ENCODE measurements at regions of chr3 and their contacts with region 1.

Region 1: DNA sequence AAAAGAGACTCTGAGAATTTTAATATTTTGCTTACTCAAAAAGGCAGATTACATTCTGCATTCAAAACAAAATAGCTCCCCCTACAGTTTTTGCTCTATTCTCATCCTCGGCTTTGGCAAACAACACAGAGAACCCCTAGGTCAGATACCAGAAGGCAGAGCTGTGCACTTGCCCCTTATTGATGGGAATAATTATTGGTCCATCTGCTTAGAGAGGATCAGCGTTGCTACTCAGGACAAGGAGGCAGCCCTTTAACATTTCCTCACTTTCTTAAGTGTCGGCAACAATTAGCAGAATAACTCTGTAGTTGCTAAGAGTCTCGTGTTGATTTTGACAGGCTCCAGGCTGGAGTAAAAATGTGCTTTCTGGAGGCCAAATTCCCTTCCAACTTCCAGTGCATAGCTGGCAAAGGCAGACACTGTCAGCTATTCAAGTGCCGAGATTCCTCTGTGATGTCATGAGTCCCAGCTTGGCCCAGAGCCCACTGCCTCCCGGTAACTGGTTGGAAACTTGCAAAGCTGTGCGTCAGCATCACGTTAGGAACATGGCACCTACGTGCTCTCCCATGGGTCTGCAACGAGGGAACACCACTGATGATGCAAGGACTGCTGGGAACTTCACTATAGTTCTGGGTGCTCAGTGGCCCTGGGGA is 482.7 kb upstream of the ADAMTS9 start:
- DNase-seq: peak; percentile 59
- H3K4me3 ChIP-seq: no peak overlapping the region
- H3K27ac ChIP-seq: no peak overlapping the region
- H3K4me1 ChIP-seq: peaks cover 22% of the 10 kb centered on the region
- H3K27me3 ChIP-seq: no peaks in the 10 kb centered on the region
- CTCF ChIP-seq: peak; percentile 42 to 47
- POLR2A ChIP-seq: no peak

Region 2: GRCh38 chr3:64685800-64686445 is 484.6 kb before region 1 on chr3:
- CTCF ChIA-PET with region 1: interaction called, 10 read pairs
- POLR2A ChIA-PET with region 1: no interaction called
- dilution Hi-C with region 1: no loop called
- intact Hi-C with region 1: loop called (anchors 1 kb)
- DNase-seq: peak; percentile 96
- H3K4me3 ChIP-seq: peak overlapping the region; percentile 61 to 89 (median 88)
- H3K27ac ChIP-seq: peak overlapping the region; percentile 84
- H3K4me1 ChIP-seq: peaks cover 17% of the 10 kb centered on the region
- H3K27me3 ChIP-seq: no peaks in the 10 kb centered on the region
- CTCF ChIP-seq: peak; percentile 10 to 51
- POLR2A ChIP-seq: peak; percentile 70

Region 3: DNA sequence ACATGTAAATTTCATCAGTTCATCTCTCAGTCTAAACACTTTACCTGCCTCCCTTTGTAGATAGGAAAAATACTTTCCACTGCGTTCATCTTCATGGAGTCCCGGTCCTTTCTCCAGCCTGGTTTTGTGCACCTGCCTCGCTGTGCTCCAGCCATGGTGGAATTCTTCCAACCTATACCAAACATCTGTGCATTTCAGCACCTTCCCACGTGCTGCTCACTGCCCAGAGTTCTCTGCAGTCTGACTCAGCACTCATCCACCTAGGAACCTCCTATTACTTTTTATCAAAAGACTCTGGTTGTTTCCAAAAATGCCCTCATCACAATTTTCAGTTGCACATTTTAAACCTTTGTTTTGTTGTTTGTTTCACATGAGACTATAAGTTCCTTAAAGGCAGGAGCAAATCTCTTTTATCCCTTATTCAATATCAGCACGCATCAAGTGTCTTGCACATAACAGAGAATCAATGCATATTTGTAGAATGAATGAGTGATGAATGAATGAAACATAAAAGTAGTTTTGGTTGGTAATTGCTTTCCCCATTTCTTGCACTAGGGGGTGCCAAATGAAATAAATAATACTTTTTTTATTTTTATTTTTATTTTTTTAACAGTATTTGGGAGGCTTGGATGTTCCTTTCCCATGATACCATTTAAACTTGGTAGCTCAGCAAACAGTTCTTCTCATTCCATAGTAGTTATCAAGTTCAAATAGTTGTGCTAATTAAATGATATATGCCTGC is 452.5 kb before region 1 on chr3:
- CTCF ChIA-PET with region 1: interaction called, 11 read pairs
- POLR2A ChIA-PET with region 1: no interaction called
- dilution Hi-C with region 1: no loop called
- intact Hi-C with region 1: loop called (anchors 1 kb)
- DNase-seq: peak; percentile 32
- H3K4me3 ChIP-seq: no peak overlapping the region
- H3K27ac ChIP-seq: no peak overlapping the region
- H3K4me1 ChIP-seq: no peaks in the 10 kb centered on the region
- H3K27me3 ChIP-seq: no peaks in the 10 kb centered on the region
- CTCF ChIP-seq: peak; percentile 22 to 31
- POLR2A ChIP-seq: no peak

Region 4: DNA sequence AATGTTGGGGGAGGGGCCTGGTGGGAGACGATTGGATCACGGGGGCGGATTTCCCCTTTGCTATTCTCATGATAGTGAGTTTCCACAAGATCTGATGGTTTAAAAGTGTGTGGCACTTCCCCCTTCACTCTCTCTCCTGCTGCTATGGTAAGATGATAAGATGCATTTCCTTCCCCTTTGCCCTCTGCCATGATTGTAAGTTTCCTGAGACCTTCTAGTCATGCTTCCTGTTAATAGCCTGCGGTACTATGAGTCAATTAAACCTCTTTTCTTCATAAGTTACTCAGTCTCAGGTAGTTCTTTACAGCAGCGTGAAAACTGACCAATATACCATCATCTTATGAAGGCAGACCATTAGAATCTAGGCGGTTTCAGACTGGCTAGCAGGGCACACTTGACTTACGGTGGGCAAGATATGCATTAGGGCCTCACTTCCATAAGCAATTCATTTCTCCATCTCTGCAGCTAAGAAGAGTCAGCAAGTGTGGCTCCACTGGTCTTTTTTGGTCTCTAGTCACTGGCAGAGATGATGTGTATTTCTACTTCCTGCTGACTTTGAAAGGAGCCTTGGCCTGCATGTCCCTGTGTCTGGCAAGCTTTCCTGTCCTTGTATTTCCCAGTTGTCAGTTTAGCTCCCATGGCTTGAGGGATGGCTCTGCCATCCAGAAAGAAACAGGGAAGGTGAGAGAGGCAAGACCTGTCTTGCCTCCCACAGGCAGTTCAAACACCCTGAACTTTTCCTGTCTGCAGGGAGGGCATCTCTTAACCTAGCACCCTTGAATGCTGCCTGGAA is 373.7 kb before region 1 on chr3:
- CTCF ChIA-PET with region 1: interaction called, 3 read pairs
- POLR2A ChIA-PET with region 1: no interaction called
- dilution Hi-C with region 1: no loop called
- intact Hi-C with region 1: loop called (anchors 1 kb)
- DNase-seq: peak; percentile 88
- H3K4me3 ChIP-seq: no peak overlapping the region
- H3K27ac ChIP-seq: peak overlapping the region; percentile 87
- H3K4me1 ChIP-seq: peaks cover 26% of the 10 kb centered on the region
- H3K27me3 ChIP-seq: no peaks in the 10 kb centered on the region
- CTCF ChIP-seq: no peak
- POLR2A ChIP-seq: peak; percentile 71

Region 5: GRCh38 chr3:64988188-64988587 is 182.3 kb before region 1 on chr3:
- CTCF ChIA-PET with region 1: interaction called, 3 read pairs
- POLR2A ChIA-PET with region 1: no interaction called
- dilution Hi-C with region 1: no loop called
- intact Hi-C with region 1: loop called (anchors 2 kb)
- DNase-seq: peak; percentile 70
- H3K4me3 ChIP-seq: no peak overlapping the region
- H3K27ac ChIP-seq: peak overlapping the region; percentile 83
- H3K4me1 ChIP-seq: peaks cover 22% of the 10 kb centered on the region
- H3K27me3 ChIP-seq: no peaks in the 10 kb centered on the region
- CTCF ChIP-seq: no peak
- POLR2A ChIP-seq: no peak

Region 6: GRCh38 chr3:65107174-65107573 is 63.3 kb before region 1 on chr3:
- CTCF ChIA-PET with region 1: interaction called, 13 read pairs
- POLR2A ChIA-PET with region 1: no interaction called
- dilution Hi-C with region 1: no loop called
- intact Hi-C with region 1: no loop called
- DNase-seq: peak; percentile 72
- H3K4me3 ChIP-seq: no peak overlapping the region
- H3K27ac ChIP-seq: peak overlapping the region; percentile 51
- H3K4me1 ChIP-seq: peaks cover 16% of the 10 kb centered on the region
- H3K27me3 ChIP-seq: no peaks in the 10 kb centered on the region
- CTCF ChIP-seq: no peak
- POLR2A ChIP-seq: no peak

Region 7: GRCh38 chr3:65313666-65314065 is 143.2 kb after region 1 on chr3:
- CTCF ChIA-PET with region 1: no interaction called
- POLR2A ChIA-PET with region 1: no interaction called
- dilution Hi-C with region 1: no loop called
- intact Hi-C with region 1: no loop called
- DNase-seq: no peak
- H3K4me3 ChIP-seq: no peak overlapping the region
- H3K27ac ChIP-seq: no peak overlapping the region
- H3K4me1 ChIP-seq: no peaks in the 10 kb centered on the region
- H3K27me3 ChIP-seq: peaks cover 5 to 6% of the 10 kb centered on the region in 2 experiments
- CTCF ChIP-seq: no peak
- POLR2A ChIP-seq: no peak